WTC11 (cell line): ENCODE measurements at regions of chr6 and their contacts with region 1.

Region 1: DNA sequence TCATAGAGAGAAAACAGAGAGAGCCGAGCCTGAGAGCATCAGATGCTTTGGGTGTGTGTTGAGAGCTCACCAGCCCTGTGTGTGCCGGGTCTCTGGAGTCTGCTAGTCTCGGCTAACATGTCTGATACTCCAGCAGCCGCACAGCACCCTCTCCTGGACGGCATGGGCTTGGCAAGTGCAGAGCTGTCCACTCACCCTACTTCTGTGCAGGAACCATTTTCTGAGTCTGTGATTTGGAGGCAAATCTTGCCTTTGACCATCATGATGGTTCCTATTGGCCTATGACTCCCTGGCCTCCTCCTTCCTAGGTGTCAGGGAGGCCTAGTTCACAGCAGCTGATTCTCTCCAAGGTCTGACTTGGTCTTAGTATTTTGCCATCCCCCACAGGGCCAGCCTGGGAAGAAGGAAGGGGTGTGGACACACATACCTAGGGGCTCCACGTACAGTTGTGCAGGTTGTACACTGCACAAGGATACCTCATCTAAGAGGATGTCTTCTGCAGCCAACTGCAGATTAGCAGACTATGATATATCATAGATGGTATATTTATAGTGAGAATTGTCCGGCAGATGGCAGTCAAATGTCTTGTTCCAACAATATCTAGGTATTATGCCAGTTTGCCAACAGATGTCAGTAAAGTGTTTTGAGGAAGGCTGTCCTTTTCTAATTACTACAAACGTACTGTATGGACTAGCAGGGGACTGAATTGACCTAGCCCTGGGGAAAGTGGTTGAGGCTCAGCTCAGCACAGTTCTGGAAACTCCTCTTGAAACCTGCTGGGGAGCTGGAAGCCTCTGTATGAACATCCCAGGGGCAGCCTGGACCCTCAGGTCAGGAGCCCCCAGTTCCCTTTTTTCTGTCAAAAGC is 13.0 kb downstream of the FGD2 start:
- DNase-seq: peak; percentile 95
- ATAC-seq: peak; percentile 90
- H3K4me3 Mint-ChIP-seq: no peak overlapping the region
- H3K27ac Mint-ChIP-seq: no peak overlapping the region; the same call in 1 of the 2 replicates
- H3K4me1 Mint-ChIP-seq: peaks cover 25% of the 10 kb centered on the region
- H3K27me3 Mint-ChIP-seq: no peaks in the 10 kb centered on the region
- CTCF ChIP-seq: peak; percentile 78

Region 2: GRCh38 chr6:36897609-36898008 is 120.8 kb before region 1 on chr6:
- CTCF ChIA-PET with region 1: interaction called, 14 read pairs
- POLR2A ChIA-PET with region 1: no interaction called
- DNase-seq: peak; percentile 22
- ATAC-seq: peak; percentile 84
- H3K4me3 Mint-ChIP-seq: no peak overlapping the region
- H3K27ac Mint-ChIP-seq: 0 out of 2 replicates have a peak overlapping the region, but pooled peaks have one; percentile 11
- H3K4me1 Mint-ChIP-seq: no peaks in the 10 kb centered on the region
- H3K27me3 Mint-ChIP-seq: no peaks in the 10 kb centered on the region
- CTCF ChIP-seq: no peak

Region 3: GRCh38 chr6:36962874-36963273 is 55.6 kb before region 1 on chr6:
- CTCF ChIA-PET with region 1: interaction called, 16 read pairs
- POLR2A ChIA-PET with region 1: no interaction called
- DNase-seq: peak; percentile 93
- ATAC-seq: peak; percentile 76
- H3K4me3 Mint-ChIP-seq: no peak overlapping the region
- H3K27ac Mint-ChIP-seq: no peak overlapping the region; the same call in 1 of the 2 replicates
- H3K4me1 Mint-ChIP-seq: peaks cover 15% of the 10 kb centered on the region
- H3K27me3 Mint-ChIP-seq: no peaks in the 10 kb centered on the region
- CTCF ChIP-seq: no peak

Region 4: GRCh38 chr6:36997811-36998722 is 20.4 kb before region 1 on chr6:
- CTCF ChIA-PET with region 1: interaction called, 28 read pairs
- POLR2A ChIA-PET with region 1: no interaction called
- DNase-seq: no peak
- ATAC-seq: 0 out of 2 replicates have a peak, but pooled peaks have one; percentile 43
- H3K4me3 Mint-ChIP-seq: no peak overlapping the region
- H3K27ac Mint-ChIP-seq: no peak overlapping the region
- H3K4me1 Mint-ChIP-seq: peaks cover 22% of the 10 kb centered on the region
- H3K27me3 Mint-ChIP-seq: no peaks in the 10 kb centered on the region
- CTCF ChIP-seq: no peak

Region 5: DNA sequence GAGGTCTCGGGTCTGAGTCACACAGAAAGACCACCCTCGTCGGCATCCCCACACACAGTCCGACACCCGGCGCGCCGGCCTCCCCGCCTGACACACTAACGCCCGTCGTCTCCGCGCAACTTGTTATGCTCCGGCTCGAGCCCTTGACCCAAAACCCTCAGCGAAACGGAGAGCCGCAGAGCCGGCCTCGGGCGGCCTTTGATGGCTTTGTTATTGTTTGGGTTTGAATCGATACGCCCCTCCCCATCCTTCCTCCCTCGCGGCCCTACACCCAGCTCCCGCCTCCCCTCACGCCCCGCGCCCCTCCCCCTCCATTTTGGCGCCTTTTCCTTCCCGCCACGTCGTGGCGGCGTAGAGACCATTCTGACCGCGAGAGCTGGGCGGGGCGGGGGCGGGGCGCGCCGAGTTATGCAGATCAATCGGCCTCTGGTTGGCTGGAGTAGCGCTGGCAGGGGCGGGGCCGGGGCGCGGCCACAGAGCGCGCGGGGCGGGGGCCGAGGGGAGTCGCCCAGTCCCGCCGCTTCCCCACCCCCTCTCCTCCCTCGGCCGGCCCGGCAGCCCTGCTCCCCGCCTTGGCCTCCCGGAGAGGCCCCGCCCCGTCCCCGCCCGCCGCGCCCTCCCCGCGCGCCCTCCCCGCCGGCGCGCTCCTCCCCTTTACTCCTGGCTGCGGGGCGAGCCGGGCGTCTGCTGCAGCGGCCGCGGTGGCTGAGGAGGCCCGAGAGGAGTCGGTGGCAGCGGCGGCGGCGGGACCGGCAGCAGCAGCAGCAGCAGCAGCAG is 151.3 kb after region 1 on chr6 and contains the start of gene PIM1:
- CTCF ChIA-PET with region 1: interaction called, 31 read pairs
- POLR2A ChIA-PET with region 1: no interaction called
- DNase-seq: peak; percentile 99
- ATAC-seq: peak; percentile 90
- H3K4me3 Mint-ChIP-seq: peak within 1 kb of the TSS; percentile 92
- H3K27ac Mint-ChIP-seq: peak within 1 kb of the TSS; percentile 99
- H3K4me1 Mint-ChIP-seq: peaks cover 51% of the 10 kb centered on the region
- H3K27me3 Mint-ChIP-seq: no peaks in the 10 kb centered on the region
- CTCF ChIP-seq: no peak
- total RNA-seq, gene PIM1: 64.7 to 81.2 TPM (median 78.1 TPM) in 3 replicates